ENCODE measurements at regions of chr2 and their contacts with region 1.

Region 1: DNA sequence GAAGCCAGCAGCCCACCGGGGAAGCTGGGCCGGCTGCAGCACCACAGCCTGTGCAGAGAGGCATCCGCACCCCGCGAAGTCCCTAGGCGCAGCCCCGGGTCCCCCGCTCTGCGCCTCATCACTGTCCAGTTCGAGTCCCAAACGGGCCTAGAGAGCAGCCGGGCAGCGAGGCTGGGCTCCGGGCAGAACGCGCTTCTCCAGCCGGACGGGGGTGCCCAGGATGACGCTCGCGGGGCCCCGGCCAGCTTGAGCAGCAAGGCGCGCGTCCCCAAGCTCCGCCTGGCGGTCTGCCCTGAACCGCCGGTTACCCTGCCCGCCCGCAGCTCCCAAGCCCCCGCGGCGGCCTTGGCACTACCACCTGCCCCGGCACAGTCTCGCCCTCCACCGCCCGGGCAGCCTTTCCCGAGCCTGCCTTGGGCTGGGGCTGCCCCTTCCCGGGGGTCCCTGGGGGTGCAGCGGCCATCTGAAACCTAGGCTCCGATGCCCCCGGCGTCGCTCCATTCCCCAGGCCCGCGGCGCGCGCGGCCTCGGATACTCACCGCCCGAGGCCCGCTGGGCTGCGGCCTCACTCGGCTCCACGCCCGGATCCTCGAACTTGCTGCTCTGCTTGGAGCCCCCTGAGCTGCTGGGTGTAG is 591 bp downstream of the SLC16A14 start:
- DNase-seq: peak in 26 of 35 experiments; percentile 3 to 51 (median 32)
- ATAC-seq: peak; percentile 38 to 57 (median 54)
- H3K4me3 ChIP-seq: peak overlapping the region; percentile 46 to 60
- H3K4me3 Mint-ChIP-seq: peak overlapping the region; percentile 82 to 87 (median 87)
- H3K27ac ChIP-seq: no peak overlapping the region
- H3K27ac Mint-ChIP-seq: no peak overlapping the region
- H3K4me1 ChIP-seq: peaks cover 0 to 22% of the 10 kb centered on the region in 2 experiments
- H3K4me1 Mint-ChIP-seq: peaks cover 9 to 19% (median 11%) of the 10 kb centered on the region in 3 donors
- H3K27me3 ChIP-seq: peaks cover 0 to 20% of the 10 kb centered on the region in 2 experiments
- H3K27me3 Mint-ChIP-seq: peaks cover 4 to 16% of the 10 kb centered on the region in 2 donors

Region 2: DNA sequence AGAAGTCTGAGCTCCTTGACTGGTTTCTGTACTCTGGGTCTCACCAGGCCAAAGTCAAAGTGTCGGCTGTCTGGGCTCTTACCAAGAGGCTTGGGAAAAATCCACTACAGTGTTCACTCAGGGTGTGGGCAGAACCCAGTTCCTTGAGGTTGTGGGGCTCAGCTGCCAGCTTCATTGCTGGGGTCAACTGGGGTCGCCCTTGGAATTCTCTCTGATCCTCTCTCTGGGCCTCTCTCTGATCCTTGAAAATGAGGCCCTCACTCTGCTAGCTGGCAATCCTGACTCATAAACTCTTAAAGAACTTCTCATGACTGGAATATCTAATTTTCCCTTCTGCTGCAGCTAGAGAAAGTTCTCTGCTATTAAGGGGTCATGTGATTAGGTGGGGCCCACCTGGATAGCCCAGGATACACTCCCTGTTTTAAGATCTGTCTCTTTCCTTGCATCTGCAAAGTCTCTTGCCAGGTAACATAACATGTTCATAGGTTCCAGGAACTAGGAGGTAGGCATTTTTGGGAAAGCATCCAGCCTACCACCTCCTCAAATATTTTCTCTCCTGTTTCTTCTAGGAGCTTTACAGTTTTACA is 85.3 kb after region 1 on chr2:
- CTCF ChIA-PET with region 1: no interaction called
- POLR2A ChIA-PET with region 1: interaction called in 1 of 2 experiments, 12 read pairs
- DNase-seq: no peak
- ATAC-seq: no peak
- H3K4me3 ChIP-seq: no peak overlapping the region
- H3K4me3 Mint-ChIP-seq: no peak overlapping the region
- H3K27ac ChIP-seq: no peak overlapping the region
- H3K27ac Mint-ChIP-seq: no peak overlapping the region
- H3K4me1 ChIP-seq: no peaks in the 10 kb centered on the region
- H3K4me1 Mint-ChIP-seq: no peaks in the 10 kb centered on the region
- H3K27me3 ChIP-seq: no peaks in the 10 kb centered on the region
- H3K27me3 Mint-ChIP-seq: no peaks in the 10 kb centered on the region

Region 3: DNA sequence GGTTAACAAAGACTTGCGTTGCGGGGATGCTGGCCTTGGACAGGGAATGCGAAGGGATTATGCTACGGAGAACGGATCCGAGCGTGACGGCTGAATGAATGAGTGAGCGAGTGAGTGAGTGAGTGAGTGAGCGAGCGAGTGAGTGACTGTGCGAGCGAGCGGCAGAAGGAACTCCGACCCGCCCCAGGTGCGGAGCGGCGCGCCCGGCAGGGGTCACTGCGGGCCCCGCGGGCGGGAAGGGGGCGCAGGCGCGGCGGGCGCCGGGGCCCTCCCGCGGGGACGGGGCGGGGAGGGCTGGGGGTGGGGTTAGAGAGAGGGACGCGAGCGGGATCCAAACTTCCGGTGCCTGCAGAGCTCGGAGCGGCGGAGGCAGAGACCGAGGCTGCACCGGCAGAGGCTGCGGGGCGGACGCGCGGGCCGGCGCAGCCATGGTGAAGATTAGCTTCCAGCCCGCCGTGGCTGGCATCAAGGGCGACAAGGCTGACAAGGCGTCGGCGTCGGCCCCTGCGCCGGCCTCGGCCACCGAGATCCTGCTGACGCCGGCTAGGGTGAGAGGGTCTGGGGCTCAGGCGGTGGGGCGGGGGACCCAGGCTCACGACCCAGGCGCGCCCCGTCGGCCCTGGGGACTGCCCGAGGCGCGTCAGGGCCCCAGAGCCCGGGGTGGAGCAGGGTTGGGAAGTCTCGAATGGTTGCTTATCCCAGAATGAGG is 796.6 kb after region 1 on chr2 and contains the start of gene ITM2C:
- CTCF ChIA-PET with region 1: no interaction called
- POLR2A ChIA-PET with region 1: interaction called in 1 of 2 experiments, 11 read pairs
- DNase-seq: peak; percentile 50 to 87 (median 71)
- ATAC-seq: peak; percentile 77 to 92 (median 81)
- H3K4me3 ChIP-seq: peak within 1 kb of the TSS; percentile 58 to 78
- H3K4me3 Mint-ChIP-seq: peak within 1 kb of the TSS; percentile 77 to 86 (median 82)
- H3K27ac ChIP-seq: peak within 1 kb of the TSS; percentile 63
- H3K27ac Mint-ChIP-seq: peak within 1 kb of the TSS; percentile 52 to 89
- H3K4me1 ChIP-seq: peaks cover 19 to 66% of the 10 kb centered on the region in 2 experiments
- H3K4me1 Mint-ChIP-seq: peaks cover 40 to 52% (median 43%) of the 10 kb centered on the region in 3 donors
- H3K27me3 ChIP-seq: peaks cover 0 to 17% of the 10 kb centered on the region in 2 experiments
- H3K27me3 Mint-ChIP-seq: peaks cover 0 to 3% of the 10 kb centered on the region in 2 donors
- total RNA-seq, gene ITM2C: 21.9 to 41.2 (median 34.8) TPM

Measured in T-cell (primary cell).